ENCODE measurements at regions of chr1 and their contacts with region 1.

Region 1: GRCh38 chr1:230972855-230973271 is 5.8 kb downstream of the TTC13 start:
- DNase-seq: peak; percentile 84
- H3K4me3 Mint-ChIP-seq: peak overlapping the region; percentile 28
- H3K27ac Mint-ChIP-seq: peak overlapping the region; percentile 75
- H3K4me1 Mint-ChIP-seq: peaks cover 60% of the 10 kb centered on the region
- H3K27me3 Mint-ChIP-seq: no peaks in the 10 kb centered on the region

Region 2: GRCh38 chr1:230957580-230957989 is 15.3 kb before region 1 on chr1:
- CTCF ChIA-PET with region 1: interaction called, 3 read pairs
- POLR2A ChIA-PET with region 1: no interaction called
- intact Hi-C with region 1: loop called (anchors 2 kb)
- DNase-seq: no peak
- H3K4me3 Mint-ChIP-seq: no peak overlapping the region
- H3K27ac Mint-ChIP-seq: no peak overlapping the region
- H3K4me1 Mint-ChIP-seq: peaks cover 24% of the 10 kb centered on the region
- H3K27me3 Mint-ChIP-seq: no peaks in the 10 kb centered on the region